OCI-LY7 (cell line): ENCODE measurements at regions of chr7 and their contacts with region 1.

Region 1: GRCh38 chr7:134126966-134127848 is at the start of gene LRGUK:
- DNase-seq: peak; percentile 66
- H3K4me3 ChIP-seq: peak within 1 kb of the TSS; percentile 63
- H3K27ac ChIP-seq: no peak within 1 kb of the TSS
- H3K4me1 ChIP-seq: no peaks in the 10 kb centered on the region
- CTCF ChIP-seq: no peak
- total RNA-seq, gene LRGUK: 0.36 and 0.95 TPM in 2 replicates

Region 2: DNA sequence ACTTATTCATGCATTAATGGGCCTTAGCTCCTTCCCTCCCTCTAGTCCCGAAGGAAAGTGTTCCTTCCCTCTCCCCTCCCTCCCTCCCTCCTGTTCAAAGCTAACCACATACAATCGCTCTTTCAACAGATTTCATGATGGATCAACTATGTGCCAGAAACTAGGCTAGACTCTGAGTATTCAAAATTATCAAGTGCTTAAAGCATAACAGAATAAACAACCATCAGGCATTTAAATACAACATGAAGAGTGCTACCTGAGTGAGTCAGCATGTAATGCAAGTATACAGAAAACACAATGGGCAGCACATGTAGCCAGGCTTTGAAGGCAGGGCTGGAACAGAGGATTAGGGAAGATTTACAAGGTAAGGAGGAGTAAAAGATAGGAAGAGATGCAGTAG is 1056.6 kb before region 1 on chr7:
- CTCF ChIA-PET with region 1: interaction called, 11 read pairs
- POLR2A ChIA-PET with region 1: no interaction called
- intact Hi-C with region 1: no loop called
- DNase-seq: no peak
- H3K4me3 ChIP-seq: no peak overlapping the region
- H3K27ac ChIP-seq: no peak overlapping the region
- H3K4me1 ChIP-seq: no peaks in the 10 kb centered on the region
- CTCF ChIP-seq: no peak

Region 3: DNA sequence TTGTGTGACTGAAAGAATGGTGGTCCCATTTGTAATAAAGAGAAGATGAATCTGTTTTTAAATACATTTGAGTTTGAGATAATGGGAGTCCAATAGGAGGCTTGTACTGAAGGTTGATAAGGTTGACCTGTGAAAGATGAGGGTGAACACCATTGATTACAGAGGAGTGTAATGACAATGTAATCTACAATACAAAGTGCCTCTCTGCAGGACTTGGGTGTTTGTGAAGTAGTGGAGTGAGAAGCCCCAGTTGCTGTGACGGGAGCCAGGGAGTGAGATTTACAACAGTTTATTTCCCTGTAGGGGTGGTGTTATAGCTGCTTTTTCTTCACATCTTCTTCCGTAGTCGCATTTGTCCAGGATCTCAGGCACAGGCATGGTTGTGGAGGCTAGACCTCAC is 684.4 kb before region 1 on chr7:
- CTCF ChIA-PET with region 1: no interaction called
- POLR2A ChIA-PET with region 1: no interaction called
- intact Hi-C with region 1: no loop called
- DNase-seq: no peak
- H3K4me3 ChIP-seq: no peak overlapping the region
- H3K27ac ChIP-seq: no peak overlapping the region
- H3K4me1 ChIP-seq: no peaks in the 10 kb centered on the region
- CTCF ChIP-seq: no peak